ENCODE measurements at regions of chr21 and their contacts with region 1.

Region 1: GRCh38 chr21:29298348-29299045 is at the start of gene BACH1:
- DNase-seq: peak; percentile 87
- H3K4me3 Mint-ChIP-seq: peak within 1 kb of the TSS; percentile 78
- H3K27ac Mint-ChIP-seq: peak within 1 kb of the TSS; percentile 76
- H3K4me1 Mint-ChIP-seq: peaks cover 66% of the 10 kb centered on the region
- H3K27me3 Mint-ChIP-seq: no peaks in the 10 kb centered on the region
- total RNA-seq, gene BACH1: 22.6 to 23.2 TPM

Region 2: DNA sequence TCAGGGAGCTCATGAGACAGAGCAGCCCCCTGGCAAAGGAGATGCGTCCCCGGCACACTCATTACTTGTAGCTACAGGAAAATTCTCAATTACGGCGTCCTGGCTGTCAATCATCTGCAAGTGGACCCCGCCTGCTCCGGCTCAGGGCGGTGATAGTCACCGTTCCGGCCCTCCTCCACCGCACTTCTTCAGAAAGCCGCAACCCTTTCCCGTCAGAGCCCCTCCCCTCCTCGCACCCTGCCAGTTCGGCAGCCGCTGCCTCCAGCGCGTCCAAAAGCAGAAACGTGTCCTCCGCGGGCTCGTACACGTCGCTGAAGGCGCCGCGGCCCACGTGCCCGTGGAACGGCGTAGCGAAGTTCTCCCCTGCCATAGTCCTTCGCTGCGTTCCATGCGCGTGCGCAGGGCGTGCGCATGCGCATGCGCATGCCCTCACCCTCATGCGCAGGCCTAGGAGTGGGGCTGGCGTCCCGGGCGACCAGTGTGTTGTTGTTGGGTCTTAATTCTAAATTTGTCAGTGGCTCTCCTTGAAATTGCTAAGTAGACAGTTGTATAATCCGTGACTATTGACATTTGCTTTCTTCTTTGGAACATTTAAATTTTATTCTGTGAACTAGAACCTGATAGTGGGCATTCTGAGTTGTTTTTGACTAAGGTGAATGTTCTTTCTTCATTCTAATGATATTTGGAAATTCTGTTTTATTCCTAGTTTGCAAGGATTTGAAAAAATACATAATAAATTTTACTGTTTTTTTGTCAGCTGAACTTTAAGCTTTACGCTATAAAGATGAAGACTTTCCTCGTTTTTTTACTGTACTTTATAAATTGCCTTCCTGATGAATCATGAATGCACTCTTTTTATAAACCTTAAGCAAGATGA is 413.3 kb before region 1 on chr21:
- CTCF ChIA-PET with region 1: no interaction called
- intact Hi-C with region 1: loop called (anchors 1 kb)
- DNase-seq: peak; percentile 92
- H3K4me3 Mint-ChIP-seq: peak overlapping the region; percentile 90
- H3K27ac Mint-ChIP-seq: peak overlapping the region; percentile 97
- H3K4me1 Mint-ChIP-seq: peaks cover 7% of the 10 kb centered on the region
- H3K27me3 Mint-ChIP-seq: no peaks in the 10 kb centered on the region

Region 3: DNA sequence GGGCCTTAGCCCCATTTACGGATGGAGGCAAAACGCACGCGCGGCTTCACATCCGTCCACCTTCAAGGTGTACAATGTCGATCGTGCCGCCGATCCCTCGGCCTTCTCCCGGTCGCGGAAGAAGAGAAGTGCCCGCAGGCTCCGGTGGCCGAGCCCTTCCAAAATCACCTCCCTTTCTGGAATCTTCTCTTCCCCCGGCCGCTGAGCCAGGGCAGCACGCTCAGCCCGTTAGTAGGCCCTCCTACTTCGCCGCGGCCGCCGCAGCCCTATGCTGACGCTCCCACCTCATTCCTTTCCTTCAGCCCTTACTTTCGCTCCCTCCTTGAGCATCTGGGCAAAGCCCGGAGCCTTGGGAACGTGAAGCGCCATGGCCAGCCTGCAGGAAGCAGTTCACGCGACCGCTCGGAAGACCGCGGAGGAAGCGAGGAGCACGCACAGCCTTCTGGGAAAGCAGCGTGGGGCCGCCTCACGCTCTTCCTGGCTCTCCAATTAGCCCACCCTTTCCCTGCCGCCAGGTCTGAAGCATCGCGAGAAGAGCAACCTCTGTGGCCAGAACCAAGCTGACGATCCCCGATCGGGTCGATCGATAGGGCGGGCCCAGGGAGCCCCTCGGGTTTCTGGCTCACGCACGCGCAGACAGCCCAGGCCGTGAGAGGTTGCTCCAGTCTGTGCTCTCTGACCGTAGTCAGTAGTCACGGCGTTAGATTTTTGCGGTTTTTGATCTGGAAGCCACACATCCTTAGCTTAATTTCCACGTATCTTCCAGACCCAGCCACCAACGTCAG is 225.1 kb before region 1 on chr21 and contains the start of gene CCT8:
- CTCF ChIA-PET with region 1: interaction called, 5 read pairs
- intact Hi-C with region 1: loop called (anchors 1 kb)
- DNase-seq: peak; percentile 99
- H3K4me3 Mint-ChIP-seq: peak within 1 kb of the TSS; percentile 94
- H3K27ac Mint-ChIP-seq: peak within 1 kb of the TSS; percentile 95
- H3K4me1 Mint-ChIP-seq: peaks cover 46% of the 10 kb centered on the region
- H3K27me3 Mint-ChIP-seq: no peaks in the 10 kb centered on the region
- total RNA-seq, gene CCT8: 482 to 515 TPM

Region 4: DNA sequence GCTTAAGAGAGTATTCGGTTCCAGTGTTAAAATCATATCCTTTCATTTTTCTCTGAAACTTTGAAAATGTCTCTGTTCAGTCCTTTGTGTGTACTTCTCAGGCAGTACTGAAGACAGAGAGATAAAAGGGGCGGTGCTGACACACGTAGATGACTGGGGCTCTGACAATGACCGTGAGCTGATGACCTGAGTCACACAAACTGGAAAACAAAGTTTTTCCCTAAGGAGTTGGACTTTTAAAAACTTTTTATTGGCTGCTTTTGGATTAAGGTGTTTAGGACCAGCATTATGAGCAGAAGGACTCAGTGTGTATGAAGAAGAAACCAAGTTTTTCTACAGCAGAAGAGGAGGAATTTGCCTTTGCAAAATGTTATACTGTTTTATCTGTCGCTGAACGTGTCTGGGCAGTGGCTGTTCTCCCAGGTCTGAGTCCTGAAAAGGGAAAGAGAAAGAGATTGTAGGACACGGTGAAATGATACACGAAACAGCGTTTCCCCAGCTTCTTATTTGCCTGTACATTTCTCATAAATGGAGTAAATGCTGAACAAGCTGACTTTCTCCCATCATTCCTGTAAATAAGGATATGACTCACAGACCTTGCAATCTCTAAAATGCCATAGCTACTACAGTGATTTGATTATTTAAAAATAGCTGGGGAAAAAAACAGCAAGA is 116.6 kb before region 1 on chr21:
- CTCF ChIA-PET with region 1: no interaction called
- intact Hi-C with region 1: loop called (anchors 1 kb)
- DNase-seq: peak; percentile 37
- H3K4me3 Mint-ChIP-seq: peak overlapping the region; percentile 45
- H3K27ac Mint-ChIP-seq: peak overlapping the region; percentile 93
- H3K4me1 Mint-ChIP-seq: peaks cover 14% of the 10 kb centered on the region
- H3K27me3 Mint-ChIP-seq: no peaks in the 10 kb centered on the region

Region 5: DNA sequence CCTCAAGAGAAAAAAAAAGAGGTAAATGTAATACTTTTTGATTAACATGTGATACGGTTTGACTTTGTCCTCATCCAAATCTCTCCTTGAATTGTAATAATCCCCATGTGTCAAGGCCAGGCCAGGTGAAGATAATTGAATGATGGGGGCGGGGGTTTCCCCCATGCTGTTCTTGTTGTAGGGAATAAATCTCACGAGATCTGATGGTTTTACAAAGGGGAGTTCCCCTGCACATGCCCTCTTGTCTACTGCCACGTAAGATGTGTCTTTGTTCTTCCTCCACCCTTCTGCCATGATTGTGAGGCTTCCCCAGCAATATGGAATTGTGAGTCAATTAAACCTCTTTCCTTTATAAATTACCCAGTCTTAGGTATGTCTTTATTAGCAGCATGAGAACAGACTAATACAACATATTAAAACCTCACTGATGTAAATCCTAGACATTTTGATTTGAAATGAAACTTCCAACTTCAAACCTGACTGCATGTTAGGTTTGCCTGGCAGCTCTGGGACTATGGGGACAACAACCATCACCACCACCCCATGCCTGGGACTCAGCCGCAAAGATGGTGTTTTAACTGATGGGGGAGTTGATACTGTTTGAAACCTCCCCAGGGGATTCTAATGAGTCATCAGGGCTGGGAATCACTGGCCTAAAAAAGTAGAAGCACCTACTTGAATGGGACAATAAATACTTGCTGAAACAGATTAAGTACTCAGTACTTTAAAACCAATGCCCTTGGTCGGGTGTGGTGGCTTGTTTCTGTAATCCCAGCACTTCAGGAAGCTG is 32.6 kb before region 1 on chr21:
- CTCF ChIA-PET with region 1: interaction called, 3 read pairs
- intact Hi-C with region 1: loop called (anchors 1 kb)
- DNase-seq: peak; percentile 75
- H3K4me3 Mint-ChIP-seq: no peak overlapping the region
- H3K27ac Mint-ChIP-seq: peak overlapping the region; percentile 51
- H3K4me1 Mint-ChIP-seq: peaks cover 15% of the 10 kb centered on the region
- H3K27me3 Mint-ChIP-seq: no peaks in the 10 kb centered on the region

Region 6: DNA sequence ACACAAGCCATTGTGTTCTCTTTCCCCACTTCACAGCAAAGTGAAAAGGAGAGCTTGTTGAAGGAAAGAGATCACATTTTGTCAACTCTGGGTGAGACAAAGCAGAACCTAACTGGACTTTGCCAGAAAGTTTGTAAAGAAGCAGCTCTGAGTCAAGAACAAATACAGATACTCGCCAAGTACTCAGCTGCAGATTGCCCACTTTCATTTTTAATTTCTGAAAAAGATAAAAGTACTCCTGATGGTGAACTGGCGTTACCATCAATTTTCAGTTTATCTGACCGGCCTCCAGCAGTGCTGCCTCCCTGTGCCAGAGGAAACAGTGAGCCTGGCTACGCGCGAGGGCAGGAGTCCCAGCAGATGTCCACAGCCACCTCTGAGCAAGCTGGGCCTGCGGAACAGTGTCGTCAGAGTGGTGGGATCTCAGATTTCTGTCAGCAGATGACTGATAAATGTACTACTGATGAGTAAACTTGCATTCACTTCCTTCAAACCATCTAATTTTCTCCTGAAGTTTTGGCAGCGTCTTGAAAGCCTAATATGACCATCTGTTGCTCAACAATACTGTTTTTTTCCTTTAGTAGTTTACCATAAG is 44.0 kb after region 1 on chr21:
- CTCF ChIA-PET with region 1: no interaction called
- intact Hi-C with region 1: no loop called
- DNase-seq: peak; percentile 60
- H3K4me3 Mint-ChIP-seq: no peak overlapping the region
- H3K27ac Mint-ChIP-seq: peak overlapping the region; percentile 69
- H3K4me1 Mint-ChIP-seq: peaks cover 29% of the 10 kb centered on the region
- H3K27me3 Mint-ChIP-seq: no peaks in the 10 kb centered on the region

Region 7: GRCh38 chr21:29436143-29436542 is 137.6 kb after region 1 on chr21:
- CTCF ChIA-PET with region 1: no interaction called
- intact Hi-C with region 1: loop called (anchors 1 kb)
- DNase-seq: peak; percentile 78
- H3K4me3 Mint-ChIP-seq: peak overlapping the region; percentile 76
- H3K27ac Mint-ChIP-seq: peak overlapping the region; percentile 83
- H3K4me1 Mint-ChIP-seq: peaks cover 50% of the 10 kb centered on the region
- H3K27me3 Mint-ChIP-seq: no peaks in the 10 kb centered on the region

Region 8: DNA sequence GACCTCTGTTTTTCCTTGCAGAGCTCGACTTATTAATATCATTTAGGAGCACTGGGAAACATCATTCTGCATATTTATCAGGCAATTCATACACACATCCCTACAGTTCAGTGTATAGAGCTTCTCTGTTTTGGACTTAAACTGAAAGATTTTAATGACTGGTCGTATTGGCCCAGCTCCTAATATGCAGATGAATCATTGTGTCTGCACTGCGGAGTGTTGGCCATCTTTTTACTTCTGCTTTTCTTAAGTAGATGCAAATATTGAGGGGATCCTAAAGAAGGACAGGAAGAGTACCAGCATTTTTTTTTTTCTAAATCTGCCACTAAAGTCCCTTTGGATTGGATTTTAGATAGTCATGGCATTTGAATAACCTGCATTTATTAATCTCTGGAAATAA is 155.0 kb after region 1 on chr21:
- CTCF ChIA-PET with region 1: no interaction called
- intact Hi-C with region 1: no loop called
- DNase-seq: no peak
- H3K4me3 Mint-ChIP-seq: no peak overlapping the region
- H3K27ac Mint-ChIP-seq: no peak overlapping the region
- H3K4me1 Mint-ChIP-seq: peaks cover 17% of the 10 kb centered on the region
- H3K27me3 Mint-ChIP-seq: no peaks in the 10 kb centered on the region

Measured in activated naive CD4-positive, alpha-beta T cell treated with anti-CD3 and anti-CD28 coated beads for 36 hours (primary cell).